Upper lobe of right lung (tissue), 1 donor: ENCODE measurements at regions of chr16 and their contacts with region 1.

Region 1: GRCh38 chr16:55465077-55465896 is 13.7 kb upstream of the MMP2 start:
- DNase-seq: peak; percentile 91
- ATAC-seq: peak; percentile 98
- H3K4me3 ChIP-seq: no peak overlapping the region
- H3K27ac ChIP-seq: no peak overlapping the region
- H3K4me1 ChIP-seq: no peaks in the 10 kb centered on the region
- H3K27me3 ChIP-seq: no peaks in the 10 kb centered on the region
- CTCF ChIP-seq: peak; percentile 100

Region 2: GRCh38 chr16:55393991-55394390 is 71.3 kb before region 1 on chr16:
- intact Hi-C with region 1: no loop called
- DNase-seq: no peak
- ATAC-seq: no peak
- H3K4me3 ChIP-seq: no peak overlapping the region
- H3K27ac ChIP-seq: no peak overlapping the region
- H3K4me1 ChIP-seq: no peaks in the 10 kb centered on the region
- H3K27me3 ChIP-seq: no peaks in the 10 kb centered on the region
- CTCF ChIP-seq: no peak

Region 3: DNA sequence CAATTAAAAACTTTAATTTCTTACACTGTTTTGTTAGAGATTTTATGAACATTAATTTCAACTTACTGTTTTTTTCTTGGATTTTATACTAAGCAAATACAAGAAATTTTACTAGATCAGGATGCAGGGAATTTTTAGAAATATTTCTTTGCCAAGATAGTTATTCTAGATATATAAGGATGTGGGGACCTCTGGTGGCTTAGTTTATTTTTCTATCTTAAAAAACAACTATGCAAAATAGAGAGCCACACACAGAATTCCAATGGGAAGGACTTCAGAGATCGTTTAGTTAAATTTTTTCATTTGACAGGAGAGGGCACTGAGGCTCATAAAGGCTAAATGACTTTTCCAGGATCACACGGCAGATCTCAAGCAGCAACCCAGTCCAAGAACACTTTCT is 78.2 kb after region 1 on chr16:
- intact Hi-C with region 1: loop called (anchors 5 kb)
- DNase-seq: no peak
- ATAC-seq: peak; percentile 33
- H3K4me3 ChIP-seq: no peak overlapping the region
- H3K27ac ChIP-seq: no peak overlapping the region
- H3K4me1 ChIP-seq: no peaks in the 10 kb centered on the region
- H3K27me3 ChIP-seq: no peaks in the 10 kb centered on the region
- CTCF ChIP-seq: peak; percentile 42

Region 4: GRCh38 chr16:55585631-55586030 is 120.3 kb after region 1 on chr16:
- intact Hi-C with region 1: no loop called
- DNase-seq: no peak
- ATAC-seq: no peak
- H3K4me3 ChIP-seq: no peak overlapping the region
- H3K27ac ChIP-seq: no peak overlapping the region
- H3K4me1 ChIP-seq: no peaks in the 10 kb centered on the region
- H3K27me3 ChIP-seq: no peaks in the 10 kb centered on the region
- CTCF ChIP-seq: no peak

Region 5: DNA sequence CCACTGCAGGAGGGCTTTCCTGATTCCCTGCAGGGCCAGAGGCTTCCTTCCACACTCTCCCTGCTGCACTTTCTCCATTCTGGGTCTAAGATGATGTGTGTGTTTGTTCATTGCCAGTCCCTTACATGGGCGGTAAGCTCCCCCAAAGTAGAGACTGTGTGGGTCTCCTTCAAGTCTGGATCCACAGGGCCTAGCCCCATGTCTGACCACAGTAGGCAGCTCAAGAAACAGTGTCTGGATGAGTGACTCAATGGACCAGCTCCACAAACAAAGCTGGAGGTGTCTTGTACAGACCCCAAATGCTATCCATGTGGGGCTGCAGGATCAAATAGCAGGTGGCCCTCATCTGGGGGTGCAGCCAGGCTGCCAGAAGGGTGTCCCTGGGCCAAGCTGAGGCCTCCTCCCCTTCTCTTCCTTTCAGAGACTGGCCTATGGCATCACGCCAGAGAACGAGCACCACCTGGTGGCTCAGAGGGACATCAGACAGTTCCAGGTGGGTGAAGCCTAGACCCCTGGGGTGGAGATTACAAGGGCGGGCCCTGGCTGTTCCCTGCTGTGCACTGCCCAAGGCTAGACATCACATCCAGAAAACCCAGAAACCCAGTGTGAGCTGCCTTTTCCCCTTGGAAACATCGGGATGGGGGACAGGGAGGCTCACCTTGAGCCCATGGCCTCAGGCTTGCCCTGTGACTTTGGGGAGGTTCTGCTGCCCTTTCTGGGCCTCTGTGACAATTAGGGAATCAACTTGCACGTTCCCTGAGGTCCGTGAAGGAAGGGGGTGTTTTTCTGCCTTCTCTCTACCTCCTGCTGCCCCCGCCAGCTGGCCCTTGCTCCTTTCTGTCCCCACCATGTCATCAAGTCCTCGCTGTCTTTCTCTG is 236.4 kb after region 1 on chr16:
- intact Hi-C with region 1: loop called (anchors 10 kb)
- DNase-seq: peak; percentile 82
- ATAC-seq: peak; percentile 81
- H3K4me3 ChIP-seq: no peak overlapping the region
- H3K27ac ChIP-seq: no peak overlapping the region
- H3K4me1 ChIP-seq: no peaks in the 10 kb centered on the region
- H3K27me3 ChIP-seq: no peaks in the 10 kb centered on the region
- CTCF ChIP-seq: peak; percentile 60